Gastrocnemius medialis (tissue), 4 donors: ENCODE measurements at regions of chr9 and their contacts with region 1.

Region 1: GRCh38 chr9:112793213-112793810 is 42.8 kb downstream of the SNX30 start:
- DNase-seq: peak; percentile 44 to 50
- ATAC-seq: peak; percentile 63 to 76
- H3K4me3 ChIP-seq: no peak overlapping the region
- H3K27ac ChIP-seq: no peak overlapping the region
- H3K4me1 ChIP-seq: no peaks in the 10 kb centered on the region
- H3K27me3 ChIP-seq: no peaks in the 10 kb centered on the region
- CTCF ChIP-seq: peak; percentile 65 to 81 (median 69)
- POLR2A ChIP-seq: no peak

Region 2: GRCh38 chr9:112743216-112743836 is 50.0 kb before region 1 on chr9:
- in situ Hi-C with region 1: no loop called
- intact Hi-C with region 1: loop called (anchors 10 kb)
- DNase-seq: no peak
- ATAC-seq: no peak
- H3K4me3 ChIP-seq: no peak overlapping the region
- H3K27ac ChIP-seq: no peak overlapping the region
- H3K4me1 ChIP-seq: no peaks in the 10 kb centered on the region
- H3K27me3 ChIP-seq: no peaks in the 10 kb centered on the region
- CTCF ChIP-seq: no peak
- POLR2A ChIP-seq: no peak